Body of pancreas (tissue), 4 donors: ENCODE measurements at regions of chr10 and their contacts with region 1.

Region 1: GRCh38 chr10:88835096-88835909 is 16.3 kb downstream of the ANKRD22 start:
- DNase-seq: peak; percentile 87 to 89 (median 88)
- ATAC-seq: peak; percentile 90
- H3K4me3 ChIP-seq: no peak overlapping the region
- H3K27ac ChIP-seq: no peak overlapping the region
- H3K4me1 ChIP-seq: peaks cover 14% of the 10 kb centered on the region
- H3K27me3 ChIP-seq: no peaks in the 10 kb centered on the region
- CTCF ChIP-seq: peak; percentile 70 to 96 (median 91)
- POLR2A ChIP-seq: no peak

Region 2: DNA sequence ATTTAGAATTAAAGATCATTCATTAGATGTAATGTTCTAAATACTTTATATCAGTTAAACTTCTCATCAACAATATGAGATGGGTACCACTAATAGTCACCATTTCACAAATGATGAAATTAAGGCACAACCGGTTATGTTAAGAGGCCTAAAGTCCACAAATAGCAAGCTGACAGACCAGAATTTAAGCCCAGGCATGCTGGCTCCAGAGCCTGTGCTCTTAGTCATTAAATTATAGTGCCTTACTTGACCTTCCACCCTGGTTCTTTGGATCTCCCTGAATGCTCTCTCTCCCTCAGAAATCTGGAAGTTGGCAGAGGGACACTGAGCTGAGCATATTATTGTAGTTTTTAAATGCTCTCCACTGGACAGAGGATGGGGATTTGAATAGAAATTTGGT is 71.9 kb before region 1 on chr10:
- intact Hi-C with region 1: no loop called
- DNase-seq: no peak
- ATAC-seq: no peak
- H3K4me3 ChIP-seq: no peak overlapping the region
- H3K27ac ChIP-seq: no peak overlapping the region
- H3K4me1 ChIP-seq: no peaks in the 10 kb centered on the region
- H3K27me3 ChIP-seq: no peaks in the 10 kb centered on the region
- CTCF ChIP-seq: no peak
- POLR2A ChIP-seq: no peak

Region 3: DNA sequence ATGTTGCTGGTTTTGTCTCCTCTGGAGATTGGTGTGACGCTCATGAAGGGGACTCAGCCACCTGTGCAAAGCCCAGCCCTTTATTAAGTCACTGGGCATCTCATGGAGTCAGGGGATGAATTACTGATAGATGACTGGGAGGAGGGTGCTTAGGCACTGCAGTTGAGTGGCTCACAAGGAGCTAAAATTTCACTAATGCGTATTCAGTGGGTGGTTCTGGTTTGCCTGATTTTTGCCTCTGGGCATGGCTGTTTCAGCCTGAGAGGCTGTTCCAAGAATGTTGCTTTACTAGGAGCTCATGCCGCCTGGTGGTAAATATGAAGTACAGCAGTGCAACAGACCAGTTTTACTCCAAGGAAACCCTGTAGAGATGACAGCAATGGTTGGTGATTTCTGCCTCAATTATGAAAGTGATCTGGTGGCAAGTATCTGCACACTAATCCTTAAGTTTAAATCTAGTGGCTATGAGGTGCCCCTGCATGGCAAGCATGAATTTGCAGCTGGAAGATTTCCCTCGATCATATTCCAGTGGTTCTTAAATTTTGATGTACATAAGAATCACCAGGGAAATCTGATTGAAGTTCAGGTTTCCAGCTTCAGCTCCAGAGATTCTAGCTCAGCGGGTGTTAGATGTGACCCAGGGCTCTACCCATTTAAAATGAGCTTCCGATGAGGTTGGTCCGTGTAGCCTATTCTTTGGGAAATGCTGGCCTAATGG is 97.4 kb after region 1 on chr10:
- intact Hi-C with region 1: loop called (anchors 5 kb)
- DNase-seq: peak; percentile 41 to 72 (median 56)
- ATAC-seq: peak; percentile 76
- H3K4me3 ChIP-seq: no peak overlapping the region
- H3K27ac ChIP-seq: no peak overlapping the region
- H3K4me1 ChIP-seq: peaks cover 12% of the 10 kb centered on the region
- H3K27me3 ChIP-seq: no peaks in the 10 kb centered on the region
- CTCF ChIP-seq: peak; percentile 70 to 92 (median 89)
- POLR2A ChIP-seq: no peak